HEK293 (cell line): ENCODE measurements at regions of chr19 and their contacts with region 1.

Region 1: GRCh38 chr19:40933034-40933433 is 51.0 kb upstream of the CYP2A7 start:
- H3K4me3 ChIP-seq: no peak overlapping the region
- H3K27ac ChIP-seq: no peak overlapping the region
- H3K4me1 ChIP-seq: 0 out of 2 replicates have a peak, but pooled peaks cover 3% of the 10 kb centered on the region
- CTCF ChIP-seq: peak; percentile 21; the same call in 1 of the 2 replicates

Region 2: GRCh38 chr19:40921005-40921897 is 11.8 kb before region 1 on chr19:
- CTCF ChIA-PET with region 1: interaction called, 36 read pairs
- POLR2A ChIA-PET with region 1: no interaction called
- H3K4me3 ChIP-seq: no peak overlapping the region
- H3K27ac ChIP-seq: peak overlapping the region; percentile 76
- H3K4me1 ChIP-seq: peaks cover 22% of the 10 kb centered on the region
- CTCF ChIP-seq: no peak